ENCODE measurements at regions of chr1 and their contacts with region 1.

Region 1: GRCh38 chr1:201042779-201043461 is 19.4 kb upstream of the KIF21B start:
- DNase-seq: peak; percentile 91
- H3K4me3 Mint-ChIP-seq: no peak overlapping the region
- H3K27ac Mint-ChIP-seq: no peak overlapping the region
- H3K4me1 Mint-ChIP-seq: peaks cover 3% of the 10 kb centered on the region
- H3K27me3 Mint-ChIP-seq: peaks cover 14% of the 10 kb centered on the region

Region 2: DNA sequence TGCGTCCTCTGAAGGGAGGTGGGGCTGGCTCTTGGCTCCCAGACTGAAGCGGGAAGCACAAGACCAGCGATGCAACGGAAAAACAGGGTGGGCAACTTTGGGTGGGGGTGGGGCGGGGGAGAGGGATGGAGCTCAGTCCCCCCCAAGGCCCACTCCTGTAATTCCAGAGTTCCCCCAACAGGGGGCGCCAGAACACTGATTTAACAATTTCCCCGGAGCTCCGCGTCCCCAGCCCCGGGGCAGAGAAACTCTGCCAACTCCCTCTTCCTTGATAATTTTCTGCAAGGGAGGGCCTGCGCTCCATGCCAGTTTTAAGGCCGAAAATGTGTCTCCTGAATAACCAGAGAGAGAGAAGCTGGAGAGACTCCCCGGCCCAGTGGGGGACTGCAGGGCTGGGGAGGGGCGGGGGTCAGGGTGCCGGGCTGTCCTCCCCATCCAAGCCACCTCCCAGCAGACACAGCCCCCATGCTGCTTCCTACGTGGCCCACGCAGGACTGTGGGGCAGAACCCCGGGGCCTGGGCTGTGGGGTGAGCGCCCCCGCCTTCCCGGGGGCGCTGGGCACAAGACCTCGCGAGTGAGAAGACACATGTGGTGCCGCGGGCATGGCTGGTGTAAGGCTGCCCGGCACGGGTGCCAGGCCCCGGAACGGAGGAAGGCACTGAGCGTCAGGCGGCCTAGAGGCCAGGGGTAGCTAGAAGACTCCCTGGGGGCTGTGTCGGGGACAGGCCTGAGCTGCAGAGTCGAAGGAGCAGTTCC is 70.8 kb before region 1 on chr1:
- intact Hi-C with region 1: loop called (anchors 1 kb)
- DNase-seq: peak; percentile 86
- H3K4me3 Mint-ChIP-seq: no peak overlapping the region
- H3K27ac Mint-ChIP-seq: no peak overlapping the region
- H3K4me1 Mint-ChIP-seq: no peaks in the 10 kb centered on the region
- H3K27me3 Mint-ChIP-seq: no peaks in the 10 kb centered on the region

Region 3: GRCh38 chr1:200979574-200980451 is 63.1 kb before region 1 on chr1:
- intact Hi-C with region 1: loop called (anchors 1 kb)
- DNase-seq: peak; percentile 89
- H3K4me3 Mint-ChIP-seq: no peak overlapping the region
- H3K27ac Mint-ChIP-seq: no peak overlapping the region
- H3K4me1 Mint-ChIP-seq: no peaks in the 10 kb centered on the region
- H3K27me3 Mint-ChIP-seq: no peaks in the 10 kb centered on the region

Region 4: GRCh38 chr1:201023517-201023902 is 19.4 kb before region 1 on chr1 and contains the start of gene KIF21B:
- intact Hi-C with region 1: loop called (anchors 2 kb)
- DNase-seq: peak; percentile 98
- H3K4me3 Mint-ChIP-seq: peak within 1 kb of the TSS; percentile 90
- H3K27ac Mint-ChIP-seq: peak within 1 kb of the TSS; percentile 97
- H3K4me1 Mint-ChIP-seq: peaks cover 70% of the 10 kb centered on the region
- H3K27me3 Mint-ChIP-seq: no peaks in the 10 kb centered on the region
- total RNA-seq, gene KIF21B: 48.3 and 49.3 TPM in 2 replicates